ENCODE measurements at regions of chr10 and their contacts with region 1.

Region 1: DNA sequence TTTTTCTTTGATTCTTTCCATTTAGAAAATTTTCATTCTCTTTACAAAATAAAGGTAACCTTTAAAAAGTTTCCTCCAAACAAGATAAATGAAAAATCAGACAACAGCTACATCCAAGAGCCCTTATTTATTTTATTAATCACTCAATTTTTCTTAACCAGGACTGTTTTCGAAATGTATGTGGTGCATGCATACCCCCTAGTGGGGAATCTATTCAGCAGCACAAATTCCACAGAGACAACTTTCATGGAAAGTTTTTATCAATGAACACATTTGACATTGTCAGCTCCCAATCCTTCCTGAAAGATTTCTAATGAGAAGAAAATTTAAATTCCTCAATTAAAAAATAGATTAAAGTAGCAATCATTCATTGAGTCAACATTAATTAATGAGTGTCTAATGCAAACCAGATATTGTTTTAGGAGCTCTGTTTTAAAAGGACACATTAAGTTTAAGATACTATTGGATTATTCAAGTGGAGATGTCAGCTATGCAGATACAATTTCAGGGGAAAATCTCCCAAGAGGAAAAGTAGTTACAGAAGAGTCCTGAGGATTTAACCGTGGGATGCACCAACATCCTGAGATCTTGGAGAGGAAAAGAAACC is 5.2 kb upstream of the HTR7 start:
- DNase-seq: no peak
- ATAC-seq: peak; percentile 23; the same call in 1 of the 3 replicates
- H3K4me3 ChIP-seq: no peak overlapping the region
- H3K27ac ChIP-seq: no peak overlapping the region
- H3K4me1 ChIP-seq: no peaks in the 10 kb centered on the region
- H3K27me3 ChIP-seq: no peaks in the 10 kb centered on the region; a peak in 2 of 4 replicates
- CTCF ChIP-seq: peak; percentile 58 to 69 (median 66)
- EP300 ChIP-seq: no peak
- POLR2A ChIP-seq: no peak
- RAD21 ChIP-seq: peak; percentile 76

Region 2: DNA sequence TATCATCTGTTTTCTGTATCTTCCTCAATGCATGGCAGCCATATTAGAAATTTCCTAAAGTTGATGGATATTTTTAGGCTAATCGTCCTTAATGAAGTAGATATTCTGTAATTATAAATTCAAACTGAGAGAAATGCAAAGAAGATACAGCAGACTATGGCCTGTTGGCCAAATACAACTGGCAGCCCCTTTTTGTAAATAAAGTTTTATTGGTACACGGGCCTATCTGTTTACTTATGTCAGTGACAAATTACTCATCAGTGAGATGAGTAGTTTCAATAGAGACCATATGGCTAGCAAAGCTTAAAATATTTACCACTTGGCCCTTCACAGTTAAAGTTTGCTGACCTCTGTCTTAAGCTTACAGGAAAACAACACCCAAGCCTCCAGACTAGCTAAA is 117.4 kb before region 1 on chr10:
- CTCF ChIA-PET with region 1: interaction called, 23 read pairs
- POLR2A ChIA-PET with region 1: no interaction called
- RAD21 ChIA-PET with region 1: interaction called, 6 read pairs
- SMC1A ChIA-PET with region 1: interaction called, 8 read pairs
- in situ Hi-C with region 1: loop called (anchors 5 kb)
- intact Hi-C with region 1: no loop called
- DNase-seq: no peak
- ATAC-seq: peak; percentile 45
- H3K4me3 ChIP-seq: no peak overlapping the region
- H3K27ac ChIP-seq: no peak overlapping the region
- H3K4me1 ChIP-seq: no peaks in the 10 kb centered on the region
- H3K27me3 ChIP-seq: peaks cover 0 to 4% of the 10 kb centered on the region in 2 experiments; a peak in 1 of 4 replicates
- CTCF ChIP-seq: no peak
- EP300 ChIP-seq: no peak
- POLR2A ChIP-seq: no peak
- RAD21 ChIP-seq: no peak

Region 3: DNA sequence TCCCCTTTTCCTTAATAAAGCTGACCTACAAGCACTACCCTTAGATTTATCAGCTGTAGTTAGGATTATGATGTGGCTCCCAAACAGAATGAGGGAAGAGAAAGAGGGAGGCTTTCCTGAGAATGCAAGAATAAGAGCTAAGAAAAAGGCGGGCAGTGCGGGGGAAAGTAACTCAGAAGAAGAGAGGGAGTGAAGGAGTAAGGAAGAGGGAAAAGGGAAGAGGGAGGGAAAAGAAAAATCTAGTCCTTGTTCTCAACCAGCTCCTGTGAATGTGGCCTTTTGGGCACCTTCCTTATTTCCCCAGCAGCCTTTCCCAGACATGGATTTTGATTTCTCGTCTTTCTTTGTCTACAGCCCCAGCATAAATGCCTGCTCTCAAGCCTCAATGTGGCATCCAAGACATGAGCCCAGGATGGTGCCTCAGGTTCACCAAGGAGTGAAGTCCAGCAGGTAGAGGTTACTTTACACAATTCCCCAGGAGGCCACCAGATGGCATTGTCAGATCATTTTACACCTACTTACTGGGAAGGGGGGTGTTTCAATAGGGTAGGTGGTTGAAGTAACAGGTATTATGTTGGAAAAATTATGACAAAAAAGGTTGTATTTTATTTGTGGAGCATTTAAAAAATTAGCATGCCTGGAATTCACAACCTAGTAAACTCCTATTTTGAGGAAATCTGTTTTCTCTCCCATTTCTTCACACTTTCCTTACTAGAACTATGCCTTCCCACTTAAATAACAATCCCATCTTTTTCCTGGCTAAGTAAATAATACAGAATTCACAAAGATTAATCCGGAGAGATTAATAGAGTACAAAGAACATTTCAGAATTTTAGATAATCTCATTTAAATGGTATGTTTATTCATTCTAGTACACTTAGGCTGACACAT is 111.7 kb before region 1 on chr10:
- CTCF ChIA-PET with region 1: interaction called, 23 read pairs
- POLR2A ChIA-PET with region 1: interaction called, 3 read pairs
- RAD21 ChIA-PET with region 1: interaction called, 6 read pairs
- SMC1A ChIA-PET with region 1: interaction called, 8 read pairs
- in situ Hi-C with region 1: loop called (anchors 5 kb)
- intact Hi-C with region 1: loop called (anchors 1 kb)
- DNase-seq: peak; percentile 27
- ATAC-seq: peak; percentile 95
- H3K4me3 ChIP-seq: no peak overlapping the region
- H3K27ac ChIP-seq: no peak overlapping the region
- H3K4me1 ChIP-seq: no peaks in the 10 kb centered on the region
- H3K27me3 ChIP-seq: peaks cover 0 to 4% of the 10 kb centered on the region in 2 experiments; a peak in 1 of 4 replicates
- CTCF ChIP-seq: peak; percentile 75 to 78 (median 76); a peak in 5 of 6 replicates
- EP300 ChIP-seq: no peak
- POLR2A ChIP-seq: no peak
- RAD21 ChIP-seq: peak; percentile 94

Region 4: DNA sequence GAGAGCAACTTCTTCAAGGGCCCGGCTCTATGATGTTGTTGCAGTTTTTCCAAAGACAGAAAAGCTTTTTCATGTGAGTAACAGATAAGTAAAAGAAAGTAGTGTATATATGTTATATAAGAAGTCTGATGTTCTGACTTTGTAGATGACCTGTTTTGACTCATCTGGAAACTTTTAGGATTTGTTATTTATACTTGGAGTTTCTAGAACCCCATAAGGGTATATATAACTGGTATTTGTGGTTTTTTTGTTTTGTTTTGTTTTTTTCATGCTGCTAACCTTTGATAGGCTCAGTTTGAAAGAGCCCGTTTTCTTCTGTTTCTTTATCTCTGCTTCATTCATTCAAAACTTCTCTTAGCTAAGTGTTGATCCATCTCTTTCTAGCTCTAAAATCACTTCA is 16.1 kb after region 1 on chr10:
- CTCF ChIA-PET with region 1: interaction called, 18 read pairs
- POLR2A ChIA-PET with region 1: no interaction called
- RAD21 ChIA-PET with region 1: no interaction called
- SMC1A ChIA-PET with region 1: interaction called, 3 read pairs
- in situ Hi-C with region 1: no loop called
- intact Hi-C with region 1: no loop called
- DNase-seq: no peak
- ATAC-seq: no peak
- H3K4me3 ChIP-seq: no peak overlapping the region
- H3K27ac ChIP-seq: no peak overlapping the region
- H3K4me1 ChIP-seq: 0 out of 2 replicates have a peak, but pooled peaks cover 7% of the 10 kb centered on the region
- H3K27me3 ChIP-seq: no peaks in the 10 kb centered on the region
- CTCF ChIP-seq: no peak
- EP300 ChIP-seq: no peak
- POLR2A ChIP-seq: no peak
- RAD21 ChIP-seq: no peak